ENCODE measurements at regions of chr7 and their contacts with region 1.

Region 1: GRCh38 chr7:30740424-30741181 is 11.3 kb upstream of the INMT start:
- DNase-seq: peak; percentile 54 to 94 (median 81)
- ATAC-seq: peak; percentile 90 to 97 (median 95)
- H3K4me3 ChIP-seq: no peak overlapping the region
- H3K27ac ChIP-seq: no peak overlapping the region
- H3K4me1 ChIP-seq: no peaks in the 10 kb centered on the region
- H3K27me3 ChIP-seq: no peaks in the 10 kb centered on the region
- CTCF ChIP-seq: peak; percentile 98 to 99 (median 99)

Region 2: DNA sequence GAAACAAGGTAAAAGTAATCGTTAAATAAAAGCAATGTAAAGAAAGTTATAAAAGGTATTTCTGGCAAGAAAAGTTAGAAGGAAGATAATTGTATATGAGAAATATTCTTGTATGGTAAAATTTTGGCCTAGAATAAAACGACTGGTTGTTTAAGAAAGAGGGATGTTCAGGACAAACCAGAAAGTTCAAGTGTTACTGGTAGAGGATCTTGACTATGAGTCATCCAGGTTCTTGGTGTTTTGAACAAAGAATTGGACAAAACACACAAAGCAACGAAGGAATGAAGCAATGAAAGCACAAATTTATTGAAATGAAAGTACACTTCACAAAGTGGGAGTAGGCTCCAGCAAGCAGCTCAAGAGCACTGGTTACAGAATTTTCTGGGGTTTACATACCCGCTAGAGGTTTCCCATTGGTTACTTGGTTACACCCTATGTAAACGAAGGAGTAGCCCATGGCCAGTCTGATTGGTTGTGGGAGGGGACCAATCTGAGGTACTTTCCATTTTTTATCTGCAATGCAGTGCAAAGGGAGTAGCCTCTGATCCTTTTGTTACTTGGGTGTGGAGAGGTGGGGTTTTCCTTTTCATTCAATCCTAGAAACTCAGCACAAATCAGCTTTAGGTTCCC is 168.3 kb before region 1 on chr7:
- intact Hi-C with region 1: no loop called
- DNase-seq: no peak
- ATAC-seq: no peak
- H3K4me3 ChIP-seq: no peak overlapping the region
- H3K27ac ChIP-seq: no peak overlapping the region
- H3K4me1 ChIP-seq: no peaks in the 10 kb centered on the region
- H3K27me3 ChIP-seq: no peaks in the 10 kb centered on the region
- CTCF ChIP-seq: no peak

Region 3: GRCh38 chr7:30625283-30625682 is 115.3 kb before region 1 on chr7:
- intact Hi-C with region 1: loop called in 2 of 3 experiments (anchors 5 kb)
- DNase-seq: no peak
- ATAC-seq: peak; percentile 66 to 93 (median 80)
- H3K4me3 ChIP-seq: no peak overlapping the region
- H3K27ac ChIP-seq: no peak overlapping the region
- H3K4me1 ChIP-seq: peaks cover 0 to 23% (median 3%) of the 10 kb centered on the region in 3 donors
- H3K27me3 ChIP-seq: no peaks in the 10 kb centered on the region
- CTCF ChIP-seq: no peak

Region 4: DNA sequence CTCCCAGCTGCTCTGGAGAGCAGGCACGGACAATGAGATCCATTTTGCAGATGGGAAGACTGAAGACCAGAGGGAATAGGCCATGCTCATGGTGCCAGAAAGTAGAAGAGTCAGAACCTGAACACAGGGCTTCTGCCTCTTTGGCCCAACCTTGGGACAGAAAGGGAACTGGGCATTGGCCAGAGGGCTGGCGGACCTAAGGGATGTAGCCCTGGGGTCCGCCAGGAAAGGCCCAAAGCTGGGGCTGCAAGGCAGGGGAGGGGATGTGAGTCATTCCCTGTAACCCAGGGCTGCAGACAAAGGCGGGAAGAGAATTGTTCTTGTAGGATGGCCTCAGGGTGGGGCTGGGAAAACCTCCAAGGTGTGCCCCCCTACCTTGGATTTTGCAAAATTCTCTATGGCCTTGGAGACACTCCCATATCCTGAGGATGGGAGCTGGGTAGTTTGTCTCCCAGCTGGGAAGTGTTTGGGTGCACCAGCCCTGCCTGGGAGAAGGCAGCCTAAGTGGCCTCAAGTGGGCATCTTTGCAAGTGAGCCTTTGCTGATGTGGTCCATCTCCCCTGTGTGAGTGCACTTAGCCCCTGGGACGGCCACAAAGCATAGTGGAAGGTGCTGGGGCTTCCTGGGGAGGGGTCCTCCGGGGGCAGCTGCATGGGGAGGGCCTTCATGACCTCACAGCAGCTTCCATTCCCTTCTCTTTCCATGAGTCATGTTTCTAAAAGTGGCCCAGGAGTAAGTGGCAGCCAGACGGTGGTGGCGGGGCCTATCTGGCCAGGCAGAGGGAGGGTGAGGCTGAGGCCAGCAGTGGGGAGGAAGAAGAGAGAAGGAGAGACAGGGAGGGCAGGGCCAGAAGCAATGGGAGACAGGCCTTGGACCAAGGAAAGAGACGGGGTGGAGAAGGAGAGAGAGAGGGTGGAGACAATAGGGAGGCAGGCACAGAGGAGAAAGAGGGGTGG is 180.3 kb after region 1 on chr7:
- intact Hi-C with region 1: no loop called
- DNase-seq: peak in 5 of 6 donors; percentile 5 to 55 (median 25)
- ATAC-seq: peak in 3 of 4 donors; percentile 30 to 60 (median 42)
- H3K4me3 ChIP-seq: no peak overlapping the region
- H3K27ac ChIP-seq: peak overlapping the region in 3 of 4 donors; percentile 3 to 58 (median 36)
- H3K4me1 ChIP-seq: peaks cover 0 to 8% (median 4%) of the 10 kb centered on the region in 3 donors
- H3K27me3 ChIP-seq: no peaks in the 10 kb centered on the region
- CTCF ChIP-seq: no peak